ENCODE measurements at regions of chr4 and their contacts with region 1.

Region 1: GRCh38 chr4:150192986-150193385 is 114.7 kb downstream of the DCLK2 start:
- DNase-seq: no peak
- ATAC-seq: no peak
- H3K4me3 ChIP-seq: no peak overlapping the region
- H3K27ac ChIP-seq: no peak overlapping the region
- H3K4me1 ChIP-seq: no peaks in the 10 kb centered on the region
- H3K27me3 ChIP-seq: no peaks in the 10 kb centered on the region
- CTCF ChIP-seq: no peak
- POLR2A ChIP-seq: no peak

Region 2: DNA sequence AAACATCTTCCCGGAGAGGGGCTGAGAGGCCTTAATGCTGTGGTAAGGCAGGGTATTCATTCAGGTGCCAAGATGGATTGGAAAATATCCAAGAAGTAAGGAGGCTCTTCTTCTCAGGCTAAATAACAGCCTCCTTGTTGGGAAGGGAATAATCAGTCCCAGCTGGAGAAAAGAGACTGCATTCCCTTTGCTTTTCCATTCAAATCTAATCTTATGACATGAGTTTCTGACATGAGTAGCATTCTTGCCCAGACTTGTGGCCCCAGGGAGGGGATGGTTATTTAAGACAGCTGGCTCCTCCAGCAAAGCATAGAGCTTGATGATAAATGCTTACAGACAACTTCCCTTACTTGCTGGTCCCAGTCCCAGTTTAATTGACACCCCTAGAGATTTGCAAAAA is 16.4 kb before region 1 on chr4:
- intact Hi-C with region 1: loop called in 1 of 10 experiments (anchors 2 kb)
- DNase-seq: peak in 3 of 5 donors; percentile 33 to 61 (median 44)
- ATAC-seq: peak in 3 of 4 donors; percentile 24 to 51 (median 32)
- H3K4me3 ChIP-seq: no peak overlapping the region
- H3K27ac ChIP-seq: peak overlapping the region in 6 of 12 donors; percentile 4 to 56 (median 26)
- H3K4me1 ChIP-seq: peaks cover 0 to 61% (median 50%) of the 10 kb centered on the region in 12 donors
- H3K27me3 ChIP-seq: no peaks in the 10 kb centered on the region
- CTCF ChIP-seq: no peak
- POLR2A ChIP-seq: no peak

Measured in heart left ventricle (tissue), 16 donors.